ENCODE measurements at regions of chr9 and their contacts with region 1.

Region 1: GRCh38 chr9:128067876-128068613 is at the start of gene SLC25A25:
- DNase-seq: peak; percentile 98 to 100
- H3K4me3 ChIP-seq: peak within 1 kb of the TSS; percentile 75 to 84 (median 82)
- H3K27ac ChIP-seq: peak within 1 kb of the TSS; percentile 92
- H3K4me1 ChIP-seq: peaks cover 10 to 16% (median 12%) of the 10 kb centered on the region in 4 experiments
- H3K27me3 ChIP-seq: no peaks in the 10 kb centered on the region; a peak in 1 of 7 replicates
- CTCF ChIP-seq: no peak
- EP300 ChIP-seq: no peak
- POLR2A ChIP-seq: no peak
- RAD21 ChIP-seq: no peak
- total RNA-seq, gene SLC25A25: 16.8 and 18.5 TPM in 2 replicates

Region 2: DNA sequence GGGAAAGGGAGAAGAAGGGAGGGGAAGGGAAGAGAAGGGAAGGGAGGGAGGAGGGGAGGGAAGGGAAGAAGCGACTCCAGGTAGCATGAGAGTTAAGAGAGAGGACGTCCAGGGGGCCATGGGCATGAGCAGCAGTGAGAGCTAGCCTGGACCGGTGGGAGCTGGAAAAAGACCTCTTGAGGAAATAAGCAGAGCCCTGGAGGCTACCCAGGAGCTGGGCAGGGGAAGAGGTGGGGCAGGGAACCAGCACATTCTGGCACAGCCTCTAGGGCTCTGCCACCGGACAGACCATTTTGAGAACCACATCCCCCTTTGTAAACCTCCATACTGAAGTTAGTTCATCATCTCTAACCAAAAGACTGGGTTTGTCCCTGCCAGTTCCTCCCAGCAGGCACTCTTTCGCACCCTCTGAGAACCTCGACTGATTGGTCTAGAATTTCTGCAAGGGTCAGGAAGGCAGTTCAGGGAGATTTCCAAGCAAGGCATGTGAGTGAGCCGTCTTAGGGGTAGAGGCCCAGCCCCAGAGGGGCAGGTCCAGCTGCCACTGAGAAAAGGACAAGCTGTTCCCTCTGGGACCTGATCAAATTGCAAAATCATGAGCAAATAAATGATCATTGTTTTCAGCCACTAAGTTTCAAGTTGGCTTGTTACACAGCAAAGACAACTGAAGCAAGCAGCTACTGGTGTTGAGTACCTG is 12.6 kb before region 1 on chr9:
- CTCF ChIA-PET with region 1: interaction called, 11 read pairs
- POLR2A ChIA-PET with region 1: interaction called, 6 read pairs
- DNase-seq: no peak
- H3K4me3 ChIP-seq: 0 out of 8 replicates have a peak overlapping the region, but pooled peaks of 1 of the 4 experiments have one; percentile 12
- H3K27ac ChIP-seq: no peak overlapping the region
- H3K4me1 ChIP-seq: peaks cover 0 to 17% (median 13%) of the 10 kb centered on the region in 4 experiments; a peak in 4 of 7 replicates
- H3K27me3 ChIP-seq: no peaks in the 10 kb centered on the region
- CTCF ChIP-seq: no peak
- EP300 ChIP-seq: no peak
- POLR2A ChIP-seq: no peak
- RAD21 ChIP-seq: no peak

Region 3: DNA sequence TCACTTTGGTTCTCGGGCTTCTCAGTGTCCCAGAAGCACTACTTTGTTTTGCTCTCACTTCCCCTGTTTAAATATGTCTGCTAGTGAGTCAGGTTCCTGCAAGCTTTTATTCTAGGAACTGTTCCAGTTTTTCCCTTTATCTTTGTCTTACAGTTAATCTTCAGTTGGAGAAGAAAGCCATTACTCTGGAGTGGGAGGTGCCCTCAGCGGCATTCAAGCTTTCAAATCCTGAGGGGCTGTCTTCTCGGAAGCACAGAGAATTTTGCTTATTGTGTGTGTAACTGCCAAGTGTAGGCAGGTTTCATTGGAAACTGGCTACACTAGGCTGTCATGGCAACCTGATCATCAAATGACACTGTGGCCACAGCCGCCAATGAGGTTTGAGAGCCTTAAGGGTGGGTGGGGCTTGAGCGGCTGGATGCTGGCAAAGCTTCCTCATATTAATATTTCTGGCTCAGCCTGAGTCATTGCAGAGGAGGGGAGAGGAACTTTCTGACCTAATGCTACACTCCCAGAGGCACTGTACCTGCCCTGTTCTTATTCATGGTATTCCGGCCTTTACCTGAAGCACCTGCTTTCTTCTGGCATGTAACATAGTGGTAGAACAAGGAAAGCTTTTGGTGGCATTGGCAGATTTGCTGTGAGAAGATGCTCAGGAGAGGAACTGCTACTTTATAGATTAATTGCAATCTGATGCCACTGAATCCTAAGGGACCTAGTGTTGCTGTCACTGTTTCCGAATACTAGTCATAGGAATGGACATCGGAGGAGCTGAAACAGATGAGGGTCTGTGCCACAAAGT is 26.3 kb after region 1 on chr9:
- CTCF ChIA-PET with region 1: interaction called, 11 read pairs
- POLR2A ChIA-PET with region 1: interaction called, 12 read pairs
- DNase-seq: no peak
- H3K4me3 ChIP-seq: no peak overlapping the region
- H3K27ac ChIP-seq: peak overlapping the region; percentile 46; the same call in 1 of the 2 replicates
- H3K4me1 ChIP-seq: peaks cover 0 to 16% (median 14%) of the 10 kb centered on the region in 4 experiments; a peak in 6 of 7 replicates
- H3K27me3 ChIP-seq: no peaks in the 10 kb centered on the region
- CTCF ChIP-seq: no peak
- EP300 ChIP-seq: no peak
- POLR2A ChIP-seq: no peak
- RAD21 ChIP-seq: no peak

Measured in H1 (cell line).